Panc1 (cell line): ENCODE measurements at regions of chr1 and their contacts with region 1.

Region 1: DNA sequence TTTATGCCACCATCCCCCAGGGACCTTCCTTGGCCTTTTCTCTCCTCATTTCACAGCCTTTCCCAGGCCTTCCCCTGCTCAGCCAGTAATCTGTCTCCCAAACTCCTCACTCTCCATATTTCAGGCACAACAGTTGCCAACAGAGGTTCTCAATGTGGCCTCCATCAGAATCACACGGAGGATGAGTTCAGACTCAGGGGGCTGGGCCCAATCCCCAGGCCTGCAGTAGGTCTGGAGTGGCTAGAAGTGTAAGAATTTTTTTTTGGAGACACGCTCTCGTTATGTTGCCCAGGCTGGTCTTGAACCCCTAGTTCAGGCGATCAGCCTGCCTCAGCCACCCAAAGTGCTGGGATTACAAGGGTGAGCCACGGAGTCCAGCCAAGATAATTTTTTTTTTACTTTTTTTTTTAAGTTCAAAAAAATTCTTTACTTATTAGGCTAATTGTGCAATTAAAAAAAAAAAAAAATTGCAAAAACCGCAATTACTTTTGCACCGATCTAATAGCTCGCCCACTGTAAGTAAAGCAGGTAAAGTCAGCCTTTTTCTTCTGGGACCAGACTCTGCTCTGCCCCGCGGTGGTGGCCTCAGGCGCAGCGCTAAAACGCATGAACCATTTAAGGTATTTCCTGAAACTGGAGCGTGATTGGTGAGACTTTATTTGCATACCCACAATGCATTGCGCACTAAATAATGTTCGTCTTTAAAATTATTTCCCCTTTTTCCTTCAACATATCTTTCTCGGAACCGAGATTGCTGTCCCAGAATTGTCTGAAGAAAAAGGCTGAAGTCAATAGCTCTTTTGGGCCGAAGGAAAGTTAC is 18.7 kb downstream of the KIAA2013 start:
- DNase-seq: peak; percentile 92
- ATAC-seq: peak; percentile 54
- H3K4me3 ChIP-seq: peak overlapping the region in 1 of 2 experiments; percentile 28; a peak in 2 of 4 replicates
- H3K27ac ChIP-seq: peak overlapping the region; percentile 99
- H3K4me1 ChIP-seq: peaks cover 8% of the 10 kb centered on the region; the same call in 1 of the 2 replicates
- H3K27me3 ChIP-seq: no peaks in the 10 kb centered on the region
- CTCF ChIP-seq: no peak; the same call in 1 of the 2 replicates

Region 2: DNA sequence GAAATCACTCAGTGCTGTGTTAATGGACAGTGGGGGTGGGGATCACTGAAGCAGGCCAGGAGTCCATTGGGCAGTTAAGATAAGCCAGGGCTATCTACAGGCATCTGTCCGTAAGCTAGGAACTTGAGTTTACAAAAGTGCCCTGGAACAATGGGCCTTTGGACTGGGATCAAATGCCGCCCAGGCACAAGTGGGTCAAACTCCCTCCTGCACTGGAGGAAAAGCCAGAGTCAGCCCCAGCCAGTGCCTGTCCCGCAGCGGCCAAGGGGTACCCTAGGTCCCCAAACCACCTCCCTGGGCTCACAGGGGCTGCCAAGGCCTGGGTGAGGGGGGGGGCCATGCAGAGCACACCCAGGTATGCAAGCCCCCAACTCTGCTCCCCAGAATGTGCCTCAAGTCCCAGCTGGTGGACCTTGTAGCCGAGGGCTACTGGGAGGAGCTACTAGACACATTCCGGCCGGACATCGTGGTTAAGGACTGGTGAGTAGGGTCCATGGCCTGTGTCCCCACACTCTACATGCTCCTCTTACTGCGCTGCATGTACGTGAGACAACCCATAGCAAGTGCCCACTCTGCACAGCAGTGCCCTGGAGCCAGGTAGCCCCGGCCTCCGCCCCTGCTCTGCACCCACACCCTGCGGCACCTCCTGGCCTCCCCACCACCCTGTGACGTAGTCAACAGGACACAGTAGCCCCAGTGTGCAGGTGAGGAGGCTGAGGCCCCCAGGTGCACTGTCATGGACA is 235.8 kb before region 1 on chr1:
- CTCF ChIA-PET with region 1: no interaction called
- POLR2A ChIA-PET with region 1: no interaction called
- in situ Hi-C with region 1: no loop called
- intact Hi-C with region 1: no loop called
- DNase-seq: no peak
- ATAC-seq: no peak; the same call in 1 of the 2 replicates
- H3K4me3 ChIP-seq: no peak overlapping the region
- H3K27ac ChIP-seq: no peak overlapping the region
- H3K4me1 ChIP-seq: peaks cover 15% of the 10 kb centered on the region
- H3K27me3 ChIP-seq: no peaks in the 10 kb centered on the region
- CTCF ChIP-seq: no peak

Region 3: DNA sequence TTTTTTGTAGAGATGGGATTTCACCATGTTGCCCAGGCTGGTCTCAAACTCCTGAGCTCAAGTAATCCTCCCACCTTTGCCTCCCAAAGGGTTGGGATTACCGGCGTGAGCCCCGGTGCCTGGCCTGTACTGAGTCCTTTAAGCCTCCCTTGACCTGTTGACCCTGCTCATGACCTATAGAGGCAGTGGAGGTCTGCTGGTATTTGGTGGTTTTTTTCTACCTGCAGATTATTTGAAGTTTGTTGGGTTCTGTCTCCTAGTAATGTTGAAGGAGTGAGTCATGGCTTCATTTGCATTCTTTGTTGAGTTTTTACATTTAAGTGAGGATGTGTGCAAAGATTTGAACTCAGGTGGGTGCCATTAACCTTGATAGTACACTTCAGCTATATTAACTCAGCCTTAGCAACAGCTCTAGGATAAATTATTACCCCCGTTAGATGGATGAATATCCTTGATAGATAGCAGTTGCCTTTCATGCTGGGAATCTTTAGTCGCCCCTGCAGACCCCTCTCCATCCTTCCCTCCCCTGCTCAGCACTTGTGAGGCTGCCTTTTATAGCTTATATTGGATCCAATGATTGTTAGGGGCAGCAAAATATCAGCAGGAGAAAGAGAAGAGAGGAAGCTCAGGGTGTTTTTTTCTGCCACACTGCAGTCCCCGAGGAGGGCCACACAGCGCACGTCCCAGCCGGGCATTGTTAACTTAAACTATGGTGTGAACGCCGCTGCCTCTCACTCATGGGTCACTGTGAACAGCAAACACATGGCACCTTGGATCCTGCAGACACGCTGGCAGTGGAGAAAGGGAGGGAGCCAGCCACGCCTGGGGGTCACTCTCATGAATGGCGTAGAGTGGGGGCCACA is 33.9 kb before region 1 on chr1:
- CTCF ChIA-PET with region 1: no interaction called
- POLR2A ChIA-PET with region 1: interaction called, 15 read pairs
- in situ Hi-C with region 1: no loop called
- intact Hi-C with region 1: no loop called
- DNase-seq: no peak
- ATAC-seq: no peak
- H3K4me3 ChIP-seq: no peak overlapping the region
- H3K27ac ChIP-seq: no peak overlapping the region
- H3K4me1 ChIP-seq: no peaks in the 10 kb centered on the region
- H3K27me3 ChIP-seq: no peaks in the 10 kb centered on the region; the same call in 1 of the 2 replicates
- CTCF ChIP-seq: no peak

Region 4: GRCh38 chr1:11893907-11894251 is 13.6 kb before region 1 on chr1:
- CTCF ChIA-PET with region 1: interaction called, 3 read pairs
- POLR2A ChIA-PET with region 1: interaction called, 15 read pairs
- in situ Hi-C with region 1: no loop called
- intact Hi-C with region 1: no loop called
- DNase-seq: peak; percentile 35
- ATAC-seq: peak; percentile 90
- H3K4me3 ChIP-seq: no peak overlapping the region
- H3K27ac ChIP-seq: no peak overlapping the region
- H3K4me1 ChIP-seq: no peaks in the 10 kb centered on the region
- H3K27me3 ChIP-seq: no peaks in the 10 kb centered on the region
- CTCF ChIP-seq: peak; percentile 95

Region 5: GRCh38 chr1:11967028-11967547 is 59.6 kb after region 1 on chr1:
- CTCF ChIA-PET with region 1: interaction called, 5 read pairs
- POLR2A ChIA-PET with region 1: interaction called, 10 read pairs
- in situ Hi-C with region 1: no loop called
- intact Hi-C with region 1: loop called (anchors 1 kb)
- DNase-seq: peak; percentile 63
- ATAC-seq: peak; percentile 93
- H3K4me3 ChIP-seq: no peak overlapping the region
- H3K27ac ChIP-seq: no peak overlapping the region
- H3K4me1 ChIP-seq: no peaks in the 10 kb centered on the region
- H3K27me3 ChIP-seq: no peaks in the 10 kb centered on the region
- CTCF ChIP-seq: no peak; the same call in 1 of the 2 replicates

Region 6: DNA sequence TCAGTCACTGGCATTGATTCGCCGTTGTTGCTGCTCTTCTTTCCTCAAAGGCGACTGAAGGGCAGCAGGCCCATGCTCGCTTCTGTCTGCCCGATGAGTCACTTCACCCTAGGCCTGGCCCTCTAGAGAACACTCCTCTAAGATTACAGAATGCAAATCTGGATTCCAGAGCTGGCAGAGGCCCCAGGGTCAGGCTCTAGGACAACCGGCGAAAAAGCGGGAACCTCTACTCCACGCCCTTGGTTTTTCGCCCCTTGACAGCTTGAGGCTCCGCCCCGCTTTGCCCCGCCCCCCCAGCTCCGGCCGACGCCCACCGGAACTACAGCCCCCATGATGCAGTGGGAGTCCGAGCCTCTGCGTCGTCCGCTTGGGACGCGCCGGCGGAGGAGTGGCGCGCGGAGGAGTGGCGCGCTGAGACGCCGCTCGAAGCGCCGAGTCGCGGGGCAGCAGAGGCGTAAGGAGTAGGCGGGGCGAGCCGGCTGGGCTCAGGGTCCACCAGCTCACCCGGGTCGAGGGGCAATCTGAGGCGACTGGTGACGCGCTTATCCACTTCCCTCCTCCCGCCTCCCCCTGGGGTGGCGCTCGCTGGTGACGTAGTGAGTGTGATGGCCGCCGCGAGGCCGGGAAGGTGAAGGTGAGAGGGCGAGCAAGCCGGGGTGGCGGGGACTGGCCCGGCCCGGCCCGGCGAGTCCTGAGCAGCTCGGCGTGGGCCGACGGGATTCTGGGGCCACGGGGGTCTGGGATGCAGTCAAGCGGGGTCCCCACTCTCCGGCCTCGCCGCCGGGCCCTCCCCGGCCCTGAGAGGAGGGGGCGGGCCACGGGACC is 72.6 kb after region 1 on chr1 and contains the start of gene MFN2:
- CTCF ChIA-PET with region 1: interaction called, 5 read pairs
- POLR2A ChIA-PET with region 1: interaction called, 23 read pairs
- in situ Hi-C with region 1: no loop called
- intact Hi-C with region 1: no loop called
- DNase-seq: peak; percentile 88
- ATAC-seq: peak; percentile 96
- H3K4me3 ChIP-seq: peak within 1 kb of the TSS; percentile 98 to 99
- H3K27ac ChIP-seq: peak within 1 kb of the TSS; percentile 90
- H3K4me1 ChIP-seq: peaks cover 26% of the 10 kb centered on the region
- H3K27me3 ChIP-seq: no peaks in the 10 kb centered on the region
- CTCF ChIP-seq: no peak
- total RNA-seq, gene MFN2: 104 TPM

Region 7: GRCh38 chr1:11985851-11986250 is 78.4 kb after region 1 on chr1:
- CTCF ChIA-PET with region 1: interaction called, 5 read pairs
- POLR2A ChIA-PET with region 1: interaction called, 23 read pairs
- in situ Hi-C with region 1: no loop called
- intact Hi-C with region 1: no loop called
- DNase-seq: no peak
- ATAC-seq: no peak
- H3K4me3 ChIP-seq: no peak overlapping the region
- H3K27ac ChIP-seq: no peak overlapping the region
- H3K4me1 ChIP-seq: peaks cover 20% of the 10 kb centered on the region
- H3K27me3 ChIP-seq: no peaks in the 10 kb centered on the region
- CTCF ChIP-seq: no peak

Region 8: DNA sequence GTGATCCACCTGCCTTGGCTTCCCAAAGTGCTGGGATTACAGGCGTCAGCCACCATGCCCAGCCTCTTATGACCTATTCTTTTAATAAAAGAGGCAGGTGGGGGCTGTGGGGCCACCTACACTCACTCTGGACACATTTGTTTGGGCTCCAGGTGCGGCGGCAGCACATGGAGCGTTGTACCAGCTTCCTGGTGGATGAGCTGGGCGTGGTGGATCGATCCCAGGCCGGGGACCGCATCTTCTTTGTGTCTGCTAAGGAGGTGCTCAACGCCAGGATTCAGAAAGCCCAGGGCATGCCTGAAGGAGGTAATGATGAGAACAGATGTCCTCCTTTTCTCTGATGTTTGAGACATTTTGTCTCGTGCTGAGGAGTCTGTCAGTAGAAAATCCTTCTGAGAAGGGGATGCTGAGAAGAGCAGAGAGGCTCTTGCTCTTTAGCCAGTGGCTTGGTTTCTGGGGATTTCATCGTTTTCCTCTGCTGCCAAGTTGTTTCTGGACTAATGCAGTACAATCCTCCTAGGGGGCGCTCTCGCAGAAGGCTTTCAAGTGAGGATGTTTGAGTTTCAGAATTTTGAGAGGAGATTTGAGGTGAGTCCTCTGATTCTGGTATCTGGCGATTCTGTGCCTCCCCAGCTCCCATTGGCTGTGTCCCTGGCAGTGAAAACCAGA is 93.9 kb after region 1 on chr1:
- CTCF ChIA-PET with region 1: no interaction called
- POLR2A ChIA-PET with region 1: interaction called, 15 read pairs
- in situ Hi-C with region 1: no loop called
- intact Hi-C with region 1: no loop called
- DNase-seq: no peak
- ATAC-seq: peak; percentile 10; the same call in 1 of the 2 replicates
- H3K4me3 ChIP-seq: no peak overlapping the region
- H3K27ac ChIP-seq: peak overlapping the region; percentile 55; the same call in 1 of the 2 replicates
- H3K4me1 ChIP-seq: 0 out of 2 replicates have a peak, but pooled peaks cover 3% of the 10 kb centered on the region
- H3K27me3 ChIP-seq: no peaks in the 10 kb centered on the region
- CTCF ChIP-seq: no peak; the same call in 1 of the 2 replicates